ENCODE measurements at regions of chr11 and their contacts with region 1.

Region 1: DNA sequence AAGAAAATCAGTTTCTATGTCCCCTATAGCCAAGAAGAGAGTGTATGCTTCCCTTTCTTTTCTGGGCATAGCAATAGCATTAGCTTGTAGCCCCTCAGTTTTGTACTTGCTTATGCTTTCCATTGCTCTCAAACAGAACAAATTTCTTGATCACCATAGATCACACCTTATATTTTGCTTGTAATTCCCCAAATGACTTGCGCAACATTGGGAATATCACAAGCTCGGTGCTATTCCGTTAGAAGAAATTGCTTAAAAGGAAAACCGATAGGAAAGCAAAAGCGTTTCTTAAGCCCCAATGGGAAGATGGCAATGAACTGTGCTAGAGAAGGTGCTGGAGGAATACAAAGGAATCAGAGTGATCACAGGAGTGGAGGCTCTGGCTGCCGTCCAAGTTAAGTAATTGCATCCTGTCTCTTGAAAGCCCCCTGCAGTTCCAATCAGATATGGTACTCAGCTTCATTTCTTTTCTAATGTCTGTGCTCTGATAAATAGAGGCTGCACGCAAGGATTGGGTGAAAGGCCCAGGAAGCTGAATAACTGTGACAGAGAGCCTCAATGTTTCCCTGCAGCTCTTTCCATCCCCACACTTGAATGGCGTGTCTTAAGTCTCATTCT is 182.1 kb upstream of the KIRREL3 start:
- DNase-seq: no peak
- H3K4me3 ChIP-seq: no peak overlapping the region
- H3K27ac ChIP-seq: no peak overlapping the region
- H3K4me1 ChIP-seq: no peaks in the 10 kb centered on the region
- H3K27me3 ChIP-seq: no peaks in the 10 kb centered on the region
- CTCF ChIP-seq: no peak
- POLR2A ChIP-seq: no peak

Region 2: DNA sequence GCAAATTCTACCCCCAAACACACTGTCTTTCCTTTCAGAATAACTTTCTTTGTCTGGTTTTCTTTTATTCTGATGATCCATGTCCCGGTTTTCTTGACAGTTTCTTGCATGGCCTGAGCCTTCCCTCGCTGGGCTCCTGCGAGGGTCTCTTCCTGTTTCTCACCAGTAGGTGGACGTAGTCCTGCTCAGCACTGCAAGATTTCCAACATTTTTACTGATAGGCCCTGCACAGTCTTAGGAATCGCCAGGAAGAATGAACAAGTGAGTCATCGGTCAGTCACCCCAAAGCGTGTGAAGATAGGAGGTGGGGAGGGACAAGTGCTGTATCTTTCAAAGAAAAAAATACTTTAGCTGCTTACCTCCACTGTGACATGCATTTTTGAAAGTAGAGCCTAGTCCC is 165.2 kb before region 1 on chr11:
- intact Hi-C with region 1: no loop called
- DNase-seq: no peak
- H3K4me3 ChIP-seq: no peak overlapping the region
- H3K27ac ChIP-seq: no peak overlapping the region
- H3K4me1 ChIP-seq: no peaks in the 10 kb centered on the region
- H3K27me3 ChIP-seq: no peaks in the 10 kb centered on the region
- CTCF ChIP-seq: no peak
- POLR2A ChIP-seq: no peak

Region 3: DNA sequence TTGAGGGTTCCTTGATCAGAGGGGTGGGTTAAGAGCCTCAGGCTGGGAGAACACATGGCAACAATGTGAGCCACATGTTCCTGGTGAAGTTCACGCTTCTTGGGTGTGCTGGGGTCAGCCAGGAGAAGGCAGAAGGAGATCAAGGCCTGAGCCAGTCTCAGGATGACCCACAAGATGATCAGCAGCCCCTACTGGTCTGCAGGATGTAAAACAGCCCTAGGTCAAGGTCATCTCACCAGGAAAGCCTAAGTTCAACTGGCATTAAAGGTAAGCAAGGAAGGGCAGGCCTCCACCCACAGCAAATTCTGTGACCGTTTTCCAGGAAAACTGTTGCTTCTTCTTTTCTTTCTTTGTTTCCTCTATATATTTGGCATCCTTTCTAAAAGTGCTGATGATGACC is 25.5 kb before region 1 on chr11:
- intact Hi-C with region 1: no loop called
- DNase-seq: no peak
- H3K4me3 ChIP-seq: no peak overlapping the region
- H3K27ac ChIP-seq: no peak overlapping the region
- H3K4me1 ChIP-seq: no peaks in the 10 kb centered on the region
- H3K27me3 ChIP-seq: no peaks in the 10 kb centered on the region
- CTCF ChIP-seq: no peak
- POLR2A ChIP-seq: no peak

Region 4: DNA sequence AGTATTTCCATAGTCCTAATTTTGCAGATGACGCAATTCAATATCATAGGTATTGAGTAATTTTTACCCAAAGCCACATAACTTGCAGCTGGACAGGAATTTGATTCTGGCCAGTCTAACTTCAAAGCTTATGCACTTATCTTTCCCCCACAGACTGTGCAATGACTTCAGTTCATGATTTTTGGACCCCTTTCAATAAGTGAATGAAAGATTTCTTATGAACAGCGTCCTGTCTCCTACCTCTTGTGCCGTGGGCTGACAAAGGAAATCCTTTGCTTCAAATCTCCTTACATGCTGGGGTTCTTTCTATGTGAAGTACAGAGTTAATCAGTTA is 35.5 kb after region 1 on chr11:
- intact Hi-C with region 1: loop called (anchors 2 kb)
- DNase-seq: no peak
- H3K4me3 ChIP-seq: no peak overlapping the region
- H3K27ac ChIP-seq: no peak overlapping the region
- H3K4me1 ChIP-seq: no peaks in the 10 kb centered on the region
- H3K27me3 ChIP-seq: no peaks in the 10 kb centered on the region
- CTCF ChIP-seq: no peak
- POLR2A ChIP-seq: no peak